A549 (cell line): ENCODE measurements at regions of chr12 and their contacts with region 1.

Region 1: DNA sequence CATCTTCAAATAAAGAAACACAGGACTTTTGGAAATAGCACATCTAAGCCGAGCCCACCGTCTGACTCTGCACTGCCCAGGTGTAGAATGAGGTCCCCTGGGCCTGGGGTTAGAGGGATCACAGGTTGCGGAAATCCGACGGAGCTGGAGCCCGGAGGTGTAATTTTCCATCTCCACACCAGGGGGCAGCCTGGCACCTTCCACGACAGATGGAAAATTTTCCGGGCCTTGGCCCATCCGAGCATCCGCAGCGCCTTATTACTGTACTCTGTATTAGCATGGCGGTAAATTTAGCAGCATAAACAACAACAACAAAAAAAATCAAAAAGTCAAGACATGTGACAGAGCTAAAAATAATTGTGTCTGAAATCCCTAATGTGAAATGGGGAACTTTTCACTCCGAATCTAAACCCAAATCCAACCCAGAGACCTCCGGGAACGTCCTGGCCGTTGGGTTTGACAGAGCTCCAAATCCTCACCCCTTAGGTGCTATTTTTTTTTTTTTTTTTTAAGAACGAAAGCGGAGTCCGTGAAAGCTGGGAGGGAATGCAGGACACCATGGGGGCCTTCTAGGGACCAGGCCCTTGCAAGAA is 93.9 kb downstream of the KSR2 start:
- DNase-seq: peak; percentile 62 to 73
- ATAC-seq: peak; percentile 75 to 88
- H3K4me3 ChIP-seq: no peak overlapping the region
- H3K27ac ChIP-seq: no peak overlapping the region
- H3K4me1 ChIP-seq: no peaks in the 10 kb centered on the region
- CTCF ChIP-seq: peak; percentile 94
- EP300 ChIP-seq: no peak
- POLR2A ChIP-seq: no peak
- RAD21 ChIP-seq: peak; percentile 95 to 96

Region 2: GRCh38 chr12:117279606-117280005 is 595.3 kb before region 1 on chr12:
- CTCF ChIA-PET with region 1: no interaction called
- POLR2A ChIA-PET with region 1: no interaction called
- DNase-seq: no peak
- ATAC-seq: 0 out of 6 replicates have a peak, but pooled peaks of 1 of the 2 experiments have one; percentile 30
- H3K4me3 ChIP-seq: no peak overlapping the region
- H3K27ac ChIP-seq: no peak overlapping the region
- H3K4me1 ChIP-seq: no peaks in the 10 kb centered on the region
- CTCF ChIP-seq: no peak
- EP300 ChIP-seq: no peak
- POLR2A ChIP-seq: no peak
- RAD21 ChIP-seq: no peak

Region 3: GRCh38 chr12:117890137-117890536 is 15.2 kb after region 1 on chr12:
- CTCF ChIA-PET with region 1: interaction called, 29 read pairs
- POLR2A ChIA-PET with region 1: no interaction called
- DNase-seq: peak; percentile 34 to 40
- ATAC-seq: peak; percentile 89 to 96
- H3K4me3 ChIP-seq: no peak overlapping the region
- H3K27ac ChIP-seq: no peak overlapping the region
- H3K4me1 ChIP-seq: no peaks in the 10 kb centered on the region
- CTCF ChIP-seq: no peak
- EP300 ChIP-seq: no peak
- POLR2A ChIP-seq: no peak
- RAD21 ChIP-seq: peak in 1 of 2 experiments; percentile 30; a peak in 1 of 5 replicates

Region 4: DNA sequence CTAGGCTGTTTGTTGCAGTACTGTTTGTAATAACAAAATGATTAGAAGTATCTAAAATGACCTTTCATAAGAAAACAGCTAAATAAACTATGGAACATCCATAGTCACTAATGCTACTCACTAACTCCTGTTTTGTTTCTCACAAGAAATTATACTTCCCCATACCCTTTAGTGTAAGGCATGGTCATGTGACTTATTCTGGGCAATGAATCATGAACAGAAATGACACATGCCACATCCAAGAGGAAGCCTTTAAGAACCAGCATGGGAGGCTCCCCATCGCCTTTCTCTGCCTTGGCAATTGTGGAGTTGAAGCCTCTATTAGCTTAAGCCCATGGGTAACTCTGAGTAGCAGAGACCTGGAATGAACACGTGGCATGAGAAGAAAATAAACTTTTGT is 44.5 kb after region 1 on chr12:
- CTCF ChIA-PET with region 1: interaction called, 11 read pairs
- POLR2A ChIA-PET with region 1: no interaction called
- DNase-seq: no peak
- ATAC-seq: no peak
- H3K4me3 ChIP-seq: no peak overlapping the region
- H3K27ac ChIP-seq: no peak overlapping the region
- H3K4me1 ChIP-seq: no peaks in the 10 kb centered on the region
- CTCF ChIP-seq: no peak
- EP300 ChIP-seq: no peak
- POLR2A ChIP-seq: no peak
- RAD21 ChIP-seq: no peak

Region 5: DNA sequence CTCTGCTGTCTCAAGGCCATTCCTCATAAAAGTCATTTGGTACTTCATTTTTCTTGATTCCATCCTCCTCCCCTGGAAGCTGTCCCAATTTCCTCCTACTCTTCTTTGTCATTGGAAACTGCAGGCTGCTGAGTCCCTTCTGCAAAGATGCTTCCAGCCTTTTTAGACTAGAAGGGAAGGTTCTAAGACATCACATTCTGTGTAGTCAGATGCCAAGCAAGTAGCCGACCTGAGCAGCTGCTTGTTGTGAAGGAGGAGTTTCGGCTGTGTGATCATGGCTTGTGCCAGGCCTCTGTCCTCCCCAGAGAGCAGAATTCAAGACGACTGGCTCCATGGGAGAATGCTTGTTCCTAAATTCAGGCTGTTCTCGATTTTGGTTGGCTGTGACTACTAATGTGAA is 150.2 kb after region 1 on chr12:
- CTCF ChIA-PET with region 1: interaction called, 20 read pairs
- POLR2A ChIA-PET with region 1: no interaction called
- DNase-seq: no peak
- ATAC-seq: no peak
- H3K4me3 ChIP-seq: no peak overlapping the region
- H3K27ac ChIP-seq: no peak overlapping the region
- H3K4me1 ChIP-seq: no peaks in the 10 kb centered on the region
- CTCF ChIP-seq: no peak
- EP300 ChIP-seq: no peak
- POLR2A ChIP-seq: no peak
- RAD21 ChIP-seq: no peak

Region 6: DNA sequence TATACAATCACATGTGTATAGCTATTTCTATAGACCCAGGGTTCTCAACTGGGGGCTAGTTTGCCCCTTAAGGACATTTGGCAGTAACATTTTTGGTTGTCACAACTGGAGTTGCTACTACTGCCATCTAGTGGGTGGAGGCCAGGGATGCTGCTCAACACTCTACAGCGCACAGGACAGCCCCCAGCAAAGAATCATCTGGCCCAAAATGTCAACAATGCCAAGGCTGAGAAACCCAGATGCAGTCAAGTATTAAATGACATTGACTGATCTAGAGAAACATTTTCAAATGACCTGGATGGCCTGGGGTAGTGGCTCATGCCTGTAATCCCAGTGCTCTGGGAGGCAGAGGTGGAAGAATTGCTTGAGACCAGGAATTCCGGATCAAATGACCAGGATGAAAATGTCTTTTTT is 180.2 kb after region 1 on chr12:
- CTCF ChIA-PET with region 1: interaction called, 23 read pairs
- POLR2A ChIA-PET with region 1: no interaction called
- DNase-seq: peak; percentile 39 to 82
- ATAC-seq: peak in 1 of 2 experiments; percentile 48; a peak in 3 of 6 replicates
- H3K4me3 ChIP-seq: no peak overlapping the region
- H3K27ac ChIP-seq: peak overlapping the region in 1 of 2 experiments; percentile 80; a peak in 4 of 6 replicates
- H3K4me1 ChIP-seq: peaks cover 83% of the 10 kb centered on the region
- CTCF ChIP-seq: peak; percentile 55; the same call in 2 of the 3 replicates
- EP300 ChIP-seq: no peak
- POLR2A ChIP-seq: no peak
- RAD21 ChIP-seq: peak in 1 of 2 experiments; percentile 19; a peak in 1 of 5 replicates